ENCODE measurements at regions of chr11 and their contacts with region 1.

Region 1: DNA sequence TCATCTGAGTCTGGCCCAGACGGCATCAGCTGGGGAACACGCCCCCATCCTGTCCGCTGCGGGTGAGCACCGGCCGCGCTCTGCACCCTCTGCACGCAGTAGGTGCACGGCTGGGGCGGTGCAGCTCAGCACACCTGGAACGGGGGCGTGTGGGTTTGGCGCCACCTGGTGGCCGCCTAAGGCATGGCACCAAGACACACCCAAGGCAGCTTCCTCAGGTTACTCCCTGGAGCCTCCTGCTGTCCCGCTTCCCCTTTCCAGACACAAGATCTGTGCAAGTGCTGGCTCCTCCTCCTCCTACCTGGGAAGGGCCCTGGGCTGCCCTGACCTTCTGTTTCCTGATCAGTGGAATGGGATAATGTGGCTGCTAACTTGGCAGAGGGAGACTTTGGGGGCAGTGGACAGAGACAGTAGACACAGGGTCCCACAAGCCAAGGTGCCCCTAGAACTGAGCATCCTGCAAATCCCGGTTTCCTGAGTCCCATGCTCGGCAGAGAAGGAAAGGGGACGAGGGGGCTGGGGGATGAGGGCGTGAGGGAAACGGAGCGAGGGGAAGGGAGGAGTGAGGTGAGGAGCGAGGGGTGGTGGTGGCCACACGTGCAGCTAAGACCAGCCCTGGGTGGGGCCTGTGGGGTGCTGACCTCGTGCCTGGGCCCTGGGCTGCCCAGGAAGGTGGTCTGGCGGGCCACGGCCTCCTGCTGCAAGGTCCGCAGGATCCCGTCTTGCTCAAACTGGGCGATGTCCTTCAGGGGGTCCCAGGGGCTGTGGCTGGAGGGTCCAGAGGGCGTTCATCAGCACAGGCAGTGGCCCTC is 34.8 kb upstream of the CARS1 start:
- DNase-seq: peak; percentile 81
- H3K4me3 Mint-ChIP-seq: no peak overlapping the region
- H3K27ac Mint-ChIP-seq: no peak overlapping the region
- H3K4me1 Mint-ChIP-seq: no peaks in the 10 kb centered on the region
- H3K27me3 Mint-ChIP-seq: peaks cover 1% of the 10 kb centered on the region

Region 2: GRCh38 chr11:2532704-2533586 is 559.1 kb before region 1 on chr11:
- CTCF ChIA-PET with region 1: interaction called, 29 read pairs
- POLR2A ChIA-PET with region 1: no interaction called
- intact Hi-C with region 1: loop called (anchors 5 kb)
- DNase-seq: peak; percentile 94
- H3K4me3 Mint-ChIP-seq: peak overlapping the region; percentile 54
- H3K27ac Mint-ChIP-seq: no peak overlapping the region
- H3K4me1 Mint-ChIP-seq: peaks cover 10% of the 10 kb centered on the region
- H3K27me3 Mint-ChIP-seq: no peaks in the 10 kb centered on the region

Region 3: DNA sequence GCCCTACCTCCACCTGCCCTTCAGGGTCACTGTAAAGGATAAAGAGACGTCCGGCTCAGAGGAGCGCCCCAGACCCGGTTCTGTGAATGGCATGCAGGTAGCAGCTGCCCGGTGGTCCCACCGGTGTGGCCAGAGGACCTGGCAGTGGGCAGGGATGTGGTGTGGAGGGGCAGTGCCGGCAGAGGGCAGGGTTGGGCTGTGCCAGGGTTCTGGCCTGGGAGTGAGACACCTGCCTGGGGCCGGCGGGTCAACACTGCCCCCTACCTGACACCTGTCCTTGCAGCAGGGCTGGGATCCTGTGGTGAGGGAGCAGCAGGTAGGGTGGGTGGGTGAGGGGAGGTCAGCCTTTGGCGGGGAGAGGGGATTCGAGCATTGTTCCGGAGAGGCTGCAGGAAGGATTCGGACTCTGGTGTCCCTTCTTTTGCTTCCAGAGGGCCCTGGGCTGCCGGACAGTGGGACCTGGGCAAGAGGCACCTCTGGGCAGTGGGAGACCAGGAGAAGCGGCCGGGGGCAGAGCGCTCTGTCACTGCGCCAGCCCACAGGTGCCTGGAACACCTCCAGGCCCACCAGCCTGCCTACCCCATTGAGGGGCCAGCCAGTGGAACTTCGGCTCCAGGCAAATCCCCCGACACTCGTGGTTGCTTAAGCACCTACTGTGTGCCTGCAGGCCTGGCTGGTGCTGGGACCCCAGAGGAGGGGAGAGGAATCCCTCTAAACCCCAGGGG is 161.1 kb before region 1 on chr11:
- CTCF ChIA-PET with region 1: interaction called, 14 read pairs
- POLR2A ChIA-PET with region 1: no interaction called
- intact Hi-C with region 1: loop called (anchors 1 kb)
- DNase-seq: peak; percentile 80
- H3K4me3 Mint-ChIP-seq: peak overlapping the region; percentile 64
- H3K27ac Mint-ChIP-seq: peak overlapping the region; percentile 25
- H3K4me1 Mint-ChIP-seq: peaks cover 33% of the 10 kb centered on the region
- H3K27me3 Mint-ChIP-seq: peaks cover 11% of the 10 kb centered on the region

Region 4: GRCh38 chr11:3006505-3007183 is 85.4 kb before region 1 on chr11:
- CTCF ChIA-PET with region 1: interaction called, 11 read pairs
- POLR2A ChIA-PET with region 1: no interaction called
- intact Hi-C with region 1: no loop called
- DNase-seq: no peak
- H3K4me3 Mint-ChIP-seq: no peak overlapping the region
- H3K27ac Mint-ChIP-seq: no peak overlapping the region
- H3K4me1 Mint-ChIP-seq: peaks cover 13% of the 10 kb centered on the region
- H3K27me3 Mint-ChIP-seq: no peaks in the 10 kb centered on the region

Region 5: DNA sequence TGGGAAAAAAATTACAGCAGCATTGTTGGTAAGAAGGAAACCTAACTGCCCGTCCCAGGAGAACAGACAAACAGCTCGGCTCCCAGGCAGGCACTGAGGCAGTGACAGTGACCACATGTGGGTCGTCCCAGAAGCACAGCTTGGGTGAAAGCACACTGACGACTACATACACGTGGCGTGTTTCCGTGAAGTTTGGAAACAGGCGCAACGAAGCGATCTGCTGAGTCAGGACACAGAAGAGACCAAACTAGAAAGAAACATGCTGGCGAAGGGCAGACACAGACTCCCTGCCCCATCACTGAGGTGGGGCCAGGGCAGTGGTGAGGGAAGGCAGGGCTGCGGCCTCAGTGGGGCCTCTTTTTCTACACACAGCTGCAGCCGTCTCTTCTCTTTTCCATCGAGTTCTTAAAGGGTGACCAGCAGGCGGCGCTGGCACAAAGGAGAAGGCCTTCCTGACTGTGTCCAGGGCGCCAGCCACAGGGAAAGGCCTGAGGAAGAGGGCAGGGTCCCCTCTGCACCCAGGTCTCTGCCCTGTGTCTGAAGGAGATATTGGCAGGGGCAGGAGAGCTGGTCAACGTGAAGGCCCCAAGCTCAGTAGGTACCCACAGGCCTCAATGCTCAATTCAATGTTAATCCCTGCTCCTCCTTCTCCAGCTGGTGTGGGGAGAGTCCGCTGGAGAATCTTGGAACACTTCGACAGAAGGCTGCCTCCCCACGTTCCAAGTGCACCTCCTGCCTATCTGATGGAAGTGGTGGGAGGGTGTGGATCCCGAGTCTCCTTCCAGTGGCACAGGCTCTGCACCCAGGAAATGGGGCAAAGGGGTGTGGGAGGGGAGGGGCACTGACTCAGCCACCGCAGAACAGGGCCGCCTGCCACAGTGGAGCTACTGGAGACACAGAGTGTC is 54.7 kb before region 1 on chr11:
- CTCF ChIA-PET with region 1: interaction called, 77 read pairs
- POLR2A ChIA-PET with region 1: interaction called, 6 read pairs
- intact Hi-C with region 1: loop called (anchors 1 kb)
- DNase-seq: peak; percentile 61
- H3K4me3 Mint-ChIP-seq: no peak overlapping the region
- H3K27ac Mint-ChIP-seq: peak overlapping the region; percentile 1
- H3K4me1 Mint-ChIP-seq: peaks cover 20% of the 10 kb centered on the region
- H3K27me3 Mint-ChIP-seq: no peaks in the 10 kb centered on the region

Region 6: GRCh38 chr11:3057069-3057963 is 34.7 kb before region 1 on chr11 and contains the start of gene CARS1:
- CTCF ChIA-PET with region 1: interaction called, 64 read pairs
- POLR2A ChIA-PET with region 1: no interaction called
- intact Hi-C with region 1: loop called (anchors 5 kb)
- DNase-seq: peak; percentile 97
- H3K4me3 Mint-ChIP-seq: peak within 1 kb of the TSS; percentile 89
- H3K27ac Mint-ChIP-seq: peak within 1 kb of the TSS; percentile 85
- H3K4me1 Mint-ChIP-seq: peaks cover 36% of the 10 kb centered on the region
- H3K27me3 Mint-ChIP-seq: no peaks in the 10 kb centered on the region
- total RNA-seq, gene CARS1: 94.7 to 97.5 TPM

Measured in activated CD4-positive, alpha-beta memory T cell treated with anti-CD3 and anti-CD28 coated beads for 36 hours (primary cell).